Heart left ventricle (tissue), 16 donors: ENCODE measurements at regions of chr21 and their contacts with region 1.

Region 1: DNA sequence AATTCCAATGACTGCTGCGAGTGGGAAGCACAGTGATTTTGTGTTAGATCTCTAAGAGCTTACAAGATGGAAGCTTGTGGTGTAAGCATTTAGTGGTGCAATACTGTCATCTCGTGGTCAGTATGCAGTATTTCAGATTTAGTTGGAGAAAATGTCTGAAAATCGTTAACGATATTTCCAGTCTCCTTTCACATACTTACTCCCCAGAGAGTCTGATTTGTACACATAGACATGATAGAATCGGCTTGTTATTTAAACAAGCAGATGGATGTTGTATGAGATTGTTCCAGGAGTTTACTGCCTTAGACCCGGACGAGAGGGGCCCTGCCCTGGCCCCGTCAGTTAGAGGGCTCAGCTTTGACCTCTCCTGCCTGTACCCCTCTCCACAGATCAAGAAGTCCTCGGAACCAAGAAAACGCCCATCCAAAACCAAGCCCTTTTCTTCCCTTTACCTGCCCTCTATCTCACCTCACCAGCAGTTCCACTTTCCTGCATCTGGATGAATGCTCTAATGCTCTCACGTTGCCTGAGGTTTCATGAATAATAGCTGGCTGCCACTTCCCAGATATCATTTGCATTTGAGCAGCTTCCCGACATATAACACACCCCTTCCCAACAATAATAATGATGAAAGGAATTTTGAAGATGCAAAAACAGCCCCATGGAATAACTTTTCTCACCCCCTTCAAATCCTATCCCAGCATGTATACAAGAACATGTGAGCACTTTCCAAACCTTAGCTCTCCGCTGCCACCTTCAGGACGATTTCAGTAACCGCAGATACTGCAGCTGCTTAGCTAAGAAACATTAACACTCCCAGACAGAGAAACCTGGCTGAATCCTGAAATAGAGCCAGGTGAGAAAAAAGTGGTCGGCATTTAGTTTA is 247.3 kb downstream of the LTN1 start:
- DNase-seq: peak; percentile 69 to 80 (median 73)
- ATAC-seq: peak; percentile 85 to 93 (median 87)
- H3K4me3 ChIP-seq: peak overlapping the region; percentile 19 to 63 (median 51)
- H3K27ac ChIP-seq: peak overlapping the region; percentile 58 to 90 (median 82)
- H3K4me1 ChIP-seq: peaks cover 0 to 29% (median 7%) of the 10 kb centered on the region in 12 donors
- H3K27me3 ChIP-seq: no peaks in the 10 kb centered on the region
- CTCF ChIP-seq: peak; percentile 87 to 98 (median 92)
- POLR2A ChIP-seq: no peak

Region 2: DNA sequence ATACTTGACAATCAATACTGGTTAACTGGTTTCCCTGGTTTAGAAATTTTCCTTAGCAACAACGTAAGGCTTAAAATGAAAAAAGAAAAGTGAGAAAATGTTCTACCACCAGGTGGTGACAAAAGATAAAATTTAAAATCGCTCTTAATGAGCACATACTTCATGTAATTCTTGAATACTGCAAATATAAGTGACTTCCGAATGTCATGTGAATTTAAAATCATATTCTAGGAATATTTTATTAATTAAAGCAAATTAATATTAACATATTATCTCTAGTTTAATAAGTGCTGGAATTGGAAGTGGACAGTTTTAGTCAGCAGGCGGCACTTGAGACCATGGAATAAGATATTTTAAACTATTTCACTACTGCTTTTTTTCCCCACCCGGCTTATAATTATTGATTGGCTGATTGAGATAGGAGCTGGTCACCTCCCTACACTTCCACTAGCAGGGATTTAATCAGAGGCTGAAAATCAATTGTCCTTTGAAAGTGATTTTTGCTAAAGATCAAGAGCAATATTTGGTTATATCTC is 1895.2 kb before region 1 on chr21:
- intact Hi-C with region 1: loop called (anchors 1 to 5 kb)
- DNase-seq: no peak
- ATAC-seq: no peak
- H3K4me3 ChIP-seq: peak overlapping the region in 6 of 12 donors; percentile 3 to 40 (median 8)
- H3K27ac ChIP-seq: no peak overlapping the region
- H3K4me1 ChIP-seq: peaks cover 0 to 19% (median 5%) of the 10 kb centered on the region in 12 donors
- H3K27me3 ChIP-seq: peaks cover 0 to 14% (median 0%) of the 10 kb centered on the region in 9 donors
- CTCF ChIP-seq: peak; percentile 44 to 86 (median 72)
- POLR2A ChIP-seq: no peak

Region 3: GRCh38 chr21:27759091-27759659 is 986.2 kb before region 1 on chr21:
- intact Hi-C with region 1: loop called in 2 of 10 experiments (anchors 5 to 10 kb)
- DNase-seq: peak in 4 of 5 donors; percentile 23 to 60 (median 43)
- ATAC-seq: peak; percentile 61 to 86 (median 72)
- H3K4me3 ChIP-seq: no peak overlapping the region
- H3K27ac ChIP-seq: no peak overlapping the region
- H3K4me1 ChIP-seq: peaks cover 0 to 16% (median 0%) of the 10 kb centered on the region in 12 donors
- H3K27me3 ChIP-seq: no peaks in the 10 kb centered on the region
- CTCF ChIP-seq: peak; percentile 16 to 64 (median 46)
- POLR2A ChIP-seq: no peak

Region 4: DNA sequence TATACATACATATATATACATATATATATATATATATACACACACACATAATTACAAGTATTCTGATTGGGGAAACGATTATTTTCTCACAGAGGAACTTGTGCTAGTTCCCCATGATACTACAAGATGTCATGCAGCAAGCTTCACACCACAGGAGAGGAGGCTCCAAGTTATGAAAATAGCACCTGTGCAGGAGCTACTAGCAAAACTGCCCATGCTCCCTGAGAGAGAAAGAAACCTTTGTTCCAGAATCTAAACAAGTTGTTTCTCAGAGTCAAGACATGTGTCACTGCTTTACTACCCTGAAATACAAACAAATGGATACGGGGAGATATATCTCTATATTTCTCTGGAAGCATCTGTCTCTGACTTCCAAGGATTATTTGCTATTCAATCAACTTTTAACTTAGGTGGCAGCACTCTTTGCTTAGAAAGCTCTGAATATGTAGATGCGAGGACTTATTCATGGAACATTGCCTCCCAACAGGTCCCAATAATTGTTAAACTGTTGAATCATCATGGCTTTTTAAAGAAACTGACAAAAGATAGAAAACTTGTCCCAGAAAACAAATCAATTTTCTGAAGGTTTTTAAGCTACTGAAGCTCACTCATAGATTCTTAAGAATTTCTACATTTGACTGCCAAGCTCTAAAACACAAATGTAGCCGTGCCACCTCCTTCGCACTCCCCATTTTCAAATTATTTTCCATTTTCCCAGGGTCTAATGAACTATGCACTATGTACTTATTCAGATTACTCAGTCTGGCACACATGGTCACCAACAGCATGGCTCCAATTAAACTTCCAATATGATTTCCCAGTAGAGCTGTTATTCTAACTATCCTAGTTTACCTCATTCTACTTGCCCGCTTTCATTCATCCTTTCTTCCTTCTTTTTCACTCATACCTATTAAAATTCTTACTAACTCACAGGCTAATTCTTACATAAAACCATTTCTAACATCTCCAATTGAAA is 681.8 kb before region 1 on chr21:
- intact Hi-C with region 1: loop called in 4 of 10 experiments (anchors 10 kb)
- DNase-seq: no peak
- ATAC-seq: no peak
- H3K4me3 ChIP-seq: no peak overlapping the region
- H3K27ac ChIP-seq: no peak overlapping the region
- H3K4me1 ChIP-seq: peaks cover 0 to 28% (median 8%) of the 10 kb centered on the region in 12 donors
- H3K27me3 ChIP-seq: no peaks in the 10 kb centered on the region
- CTCF ChIP-seq: no peak
- POLR2A ChIP-seq: no peak

Region 5: GRCh38 chr21:28633839-28634555 is 111.4 kb before region 1 on chr21:
- intact Hi-C with region 1: loop called in 1 of 10 experiments (anchors 10 kb)
- DNase-seq: peak; percentile 63 to 82 (median 64)
- ATAC-seq: peak; percentile 84 to 94 (median 92)
- H3K4me3 ChIP-seq: no peak overlapping the region
- H3K27ac ChIP-seq: peak overlapping the region; percentile 37 to 85 (median 77)
- H3K4me1 ChIP-seq: peaks cover 0 to 35% (median 27%) of the 10 kb centered on the region in 12 donors
- H3K27me3 ChIP-seq: no peaks in the 10 kb centered on the region
- CTCF ChIP-seq: no peak
- POLR2A ChIP-seq: no peak

Region 6: GRCh38 chr21:28943631-28944030 is 198.3 kb after region 1 on chr21:
- intact Hi-C with region 1: loop called in 2 of 10 experiments (anchors 5 kb)
- DNase-seq: no peak
- ATAC-seq: no peak
- H3K4me3 ChIP-seq: no peak overlapping the region
- H3K27ac ChIP-seq: no peak overlapping the region
- H3K4me1 ChIP-seq: peaks cover 0 to 8% (median 0%) of the 10 kb centered on the region in 12 donors
- H3K27me3 ChIP-seq: no peaks in the 10 kb centered on the region
- CTCF ChIP-seq: no peak
- POLR2A ChIP-seq: no peak

Region 7: GRCh38 chr21:30072496-30072895 is 1327.1 kb after region 1 on chr21:
- intact Hi-C with region 1: no loop called
- DNase-seq: no peak
- ATAC-seq: no peak
- H3K4me3 ChIP-seq: no peak overlapping the region
- H3K27ac ChIP-seq: no peak overlapping the region
- H3K4me1 ChIP-seq: no peaks in the 10 kb centered on the region
- H3K27me3 ChIP-seq: no peaks in the 10 kb centered on the region
- CTCF ChIP-seq: peak in 6 of 12 donors; percentile 7 to 38 (median 28)
- POLR2A ChIP-seq: no peak